Activated CD4-positive, alpha-beta memory T cell treated with anti-CD3 and anti-CD28 coated beads for 36 hours (primary cell): ENCODE measurements at regions of chr5 and their contacts with region 1.

Region 1: DNA sequence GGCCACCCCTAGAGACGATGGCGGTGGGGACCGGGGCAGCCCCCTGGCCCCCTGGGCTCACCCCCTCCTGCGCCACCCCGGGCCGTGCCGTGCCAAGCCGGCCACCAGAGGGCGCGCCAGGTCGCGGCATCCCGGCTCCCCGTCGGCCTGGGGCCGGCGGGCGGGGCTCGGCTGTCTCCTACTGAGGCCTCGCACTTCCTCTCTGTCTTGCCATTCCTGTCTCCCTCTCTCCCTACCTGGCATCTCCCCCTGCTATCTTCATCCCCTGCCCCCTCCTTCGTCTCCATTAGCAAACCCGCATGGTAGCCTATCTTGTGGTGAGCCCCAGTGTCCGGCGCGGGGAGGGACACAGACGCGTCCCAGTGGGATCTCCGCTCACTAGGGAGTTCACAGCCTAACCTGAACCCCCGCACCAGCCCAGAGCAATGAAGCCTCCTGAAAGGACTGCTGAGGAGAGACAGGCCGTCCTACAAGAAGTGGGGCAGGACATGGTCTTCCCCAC is 29.8 kb upstream of the FABP6 start:
- DNase-seq: peak; percentile 77
- H3K4me3 Mint-ChIP-seq: peak overlapping the region; percentile 64
- H3K27ac Mint-ChIP-seq: no peak overlapping the region
- H3K4me1 Mint-ChIP-seq: peaks cover 3% of the 10 kb centered on the region
- H3K27me3 Mint-ChIP-seq: peaks cover 8% of the 10 kb centered on the region

Region 2: DNA sequence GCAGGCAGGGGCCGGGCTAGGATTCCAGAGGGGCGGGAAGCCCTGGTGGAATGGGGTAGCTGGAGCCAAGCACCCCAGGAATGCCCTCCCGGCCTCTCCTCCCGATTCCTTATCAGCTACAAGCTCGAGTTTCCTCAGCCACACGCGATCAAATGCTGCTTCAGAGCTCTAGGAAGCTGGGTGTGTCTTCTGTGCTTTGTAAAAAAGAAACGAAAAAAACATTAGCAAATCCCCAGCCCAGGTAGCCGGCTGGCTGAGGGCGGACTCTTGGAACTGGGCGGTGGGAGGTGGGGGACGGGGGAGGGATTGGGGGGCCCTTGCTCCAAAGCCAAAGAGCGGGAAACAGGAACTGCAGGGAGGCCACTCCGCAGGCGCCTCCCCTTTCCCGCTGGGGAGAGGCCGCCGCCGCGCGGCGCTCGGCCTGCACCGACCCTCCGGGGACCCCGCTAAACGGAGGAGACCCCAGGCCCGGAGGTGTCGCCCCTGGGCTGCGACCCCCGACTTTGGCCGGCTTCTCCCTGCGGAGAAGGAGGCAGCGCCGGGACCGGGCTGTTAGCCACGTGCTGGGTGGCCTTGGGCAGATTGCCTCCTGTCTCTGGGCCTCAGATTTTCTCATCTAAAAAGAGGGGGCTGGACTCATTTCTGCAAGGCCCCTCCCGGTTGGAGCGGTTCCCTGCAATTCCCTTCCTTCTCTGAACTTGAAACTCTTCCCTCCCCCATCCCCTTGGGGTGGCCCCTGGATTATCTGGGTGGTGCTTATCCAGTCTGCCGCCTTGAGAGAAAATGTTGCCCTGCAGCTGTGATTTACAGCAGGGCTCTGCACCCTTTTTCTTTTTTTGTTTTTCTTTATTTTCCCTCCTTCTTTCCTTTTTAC is 11.1 kb before region 1 on chr5:
- CTCF ChIA-PET with region 1: interaction called, 12 read pairs
- POLR2A ChIA-PET with region 1: no interaction called
- intact Hi-C with region 1: no loop called
- DNase-seq: no peak
- H3K4me3 Mint-ChIP-seq: no peak overlapping the region
- H3K27ac Mint-ChIP-seq: no peak overlapping the region
- H3K4me1 Mint-ChIP-seq: no peaks in the 10 kb centered on the region
- H3K27me3 Mint-ChIP-seq: peaks cover 23% of the 10 kb centered on the region

Region 3: DNA sequence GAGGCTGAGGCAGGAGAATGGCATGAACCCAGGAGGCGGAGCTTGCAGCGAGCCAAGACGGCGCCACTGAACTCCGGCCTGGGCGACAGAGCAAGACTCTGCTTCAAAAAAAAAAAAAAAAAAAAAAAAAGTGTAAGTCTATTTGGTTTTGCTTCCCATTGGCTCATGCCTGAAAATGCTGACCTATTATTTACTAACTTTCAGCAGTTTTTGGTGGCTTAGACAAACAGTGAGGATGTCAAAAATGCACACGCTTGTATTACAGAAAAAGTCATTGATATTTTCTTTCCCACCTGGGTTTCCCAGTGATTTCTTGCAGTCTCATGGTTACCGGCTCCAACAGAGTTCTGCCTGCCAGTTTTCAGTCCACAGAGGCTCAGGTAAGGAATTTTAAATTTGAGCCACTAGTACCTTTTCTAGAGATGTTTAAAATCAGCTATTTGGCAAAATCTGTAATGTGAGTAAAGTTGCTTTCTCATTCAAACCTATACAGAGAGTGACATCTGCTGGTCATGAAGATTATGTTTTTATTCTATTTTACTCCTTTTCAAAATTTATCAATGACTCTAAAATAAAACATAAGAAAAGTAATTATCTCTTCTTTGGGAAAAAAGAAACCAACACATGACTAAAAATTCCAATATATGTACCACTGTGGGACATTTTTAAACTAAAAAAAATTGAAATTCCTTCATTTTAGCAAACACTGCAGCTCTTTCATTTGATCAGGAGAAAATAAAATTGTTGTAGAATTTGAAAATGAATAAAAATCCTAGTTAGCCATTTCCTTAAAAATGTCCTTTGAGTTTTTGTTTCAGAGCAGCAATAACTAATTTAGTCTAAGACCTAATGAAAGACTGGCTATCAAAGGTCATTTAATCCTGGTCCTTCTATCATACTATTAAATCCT is 191.6 kb after region 1 on chr5:
- CTCF ChIA-PET with region 1: interaction called, 11 read pairs
- POLR2A ChIA-PET with region 1: no interaction called
- intact Hi-C with region 1: loop called (anchors 1 kb)
- DNase-seq: no peak
- H3K4me3 Mint-ChIP-seq: no peak overlapping the region
- H3K27ac Mint-ChIP-seq: no peak overlapping the region
- H3K4me1 Mint-ChIP-seq: no peaks in the 10 kb centered on the region
- H3K27me3 Mint-ChIP-seq: no peaks in the 10 kb centered on the region